Ascending aorta (tissue), 2 donors: ENCODE measurements at regions of chr5 and their contacts with region 1.

Region 1: GRCh38 chr5:95835682-95836385 is 13.3 kb upstream of the GLRX start:
- DNase-seq: peak in 1 of 2 donors; percentile 82
- H3K4me3 ChIP-seq: peak overlapping the region; percentile 75 to 89
- H3K27ac ChIP-seq: peak overlapping the region; percentile 89 to 90
- H3K4me1 ChIP-seq: peaks cover 3 to 19% of the 10 kb centered on the region in 2 donors
- H3K27me3 ChIP-seq: no peaks in the 10 kb centered on the region
- CTCF ChIP-seq: no peak

Region 2: GRCh38 chr5:95808686-95809413 is 27.0 kb before region 1 on chr5:
- intact Hi-C with region 1: loop called (anchors 2 kb)
- DNase-seq: peak; percentile 61 to 93
- H3K4me3 ChIP-seq: peak overlapping the region; percentile 2 to 6
- H3K27ac ChIP-seq: peak overlapping the region; percentile 72 to 76
- H3K4me1 ChIP-seq: peaks cover 3 to 32% of the 10 kb centered on the region in 2 donors
- H3K27me3 ChIP-seq: no peaks in the 10 kb centered on the region
- CTCF ChIP-seq: no peak

Region 3: DNA sequence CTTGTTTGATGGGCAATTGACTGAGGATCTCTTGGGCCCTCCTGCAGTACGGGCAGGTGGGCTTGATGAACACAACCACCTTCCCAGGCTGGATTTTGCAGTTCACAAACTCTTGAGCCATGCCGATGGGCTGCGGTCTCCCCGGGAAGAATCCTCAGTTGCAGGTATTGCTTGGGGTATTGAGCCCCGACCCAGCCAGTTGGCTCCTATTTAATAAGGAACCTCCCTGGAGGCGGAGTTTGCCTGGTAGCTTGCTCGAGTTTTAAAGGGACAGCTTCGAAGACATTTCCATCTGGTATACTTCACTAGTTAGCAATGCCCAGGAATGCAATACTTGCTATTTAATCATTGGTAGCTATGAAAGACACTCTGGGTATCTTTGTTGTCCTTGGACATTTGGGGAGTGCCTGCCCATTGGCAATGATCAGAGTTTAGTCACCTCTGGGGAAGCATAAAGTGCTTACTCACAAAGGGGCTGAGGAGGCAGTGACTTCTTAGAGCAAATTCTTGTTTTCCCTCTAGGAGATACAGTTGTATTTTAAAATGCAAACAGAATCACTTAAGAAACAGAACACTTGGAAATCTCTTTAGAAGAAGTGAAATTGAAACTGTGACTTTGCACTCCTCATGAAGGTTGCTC is 13.2 kb before region 1 on chr5 and contains the start of gene GLRX:
- intact Hi-C with region 1: loop called (anchors 1 kb)
- DNase-seq: peak in 1 of 2 donors; percentile 88
- H3K4me3 ChIP-seq: peak within 1 kb of the TSS; percentile 44 to 80
- H3K27ac ChIP-seq: peak within 1 kb of the TSS; percentile 78 to 88
- H3K4me1 ChIP-seq: peaks cover 3 to 21% of the 10 kb centered on the region in 2 donors
- H3K27me3 ChIP-seq: no peaks in the 10 kb centered on the region
- CTCF ChIP-seq: no peak
- total RNA-seq, gene GLRX: 18.5 TPM